ENCODE measurements at regions of chr4 and their contacts with region 1.

Region 1: GRCh38 chr4:120049732-120050494 is 16.7 kb downstream of the MAD2L1 start:
- DNase-seq: peak in 3 of 4 donors; percentile 73 to 89 (median 77)
- ATAC-seq: peak; percentile 99
- H3K4me3 ChIP-seq: no peak overlapping the region
- H3K27ac ChIP-seq: no peak overlapping the region
- H3K4me1 ChIP-seq: peaks cover 4 to 25% of the 10 kb centered on the region in 2 donors
- H3K27me3 ChIP-seq: no peaks in the 10 kb centered on the region
- CTCF ChIP-seq: peak; percentile 60 to 85

Region 2: GRCh38 chr4:119559044-119559647 is 490.8 kb before region 1 on chr4:
- intact Hi-C with region 1: loop called in 1 of 2 experiments (anchors 10 kb)
- DNase-seq: peak in 2 of 4 donors; percentile 38 to 71
- ATAC-seq: peak; percentile 70
- H3K4me3 ChIP-seq: no peak overlapping the region
- H3K27ac ChIP-seq: no peak overlapping the region
- H3K4me1 ChIP-seq: no peaks in the 10 kb centered on the region
- H3K27me3 ChIP-seq: no peaks in the 10 kb centered on the region
- CTCF ChIP-seq: peak; percentile 26 to 56

Region 3: DNA sequence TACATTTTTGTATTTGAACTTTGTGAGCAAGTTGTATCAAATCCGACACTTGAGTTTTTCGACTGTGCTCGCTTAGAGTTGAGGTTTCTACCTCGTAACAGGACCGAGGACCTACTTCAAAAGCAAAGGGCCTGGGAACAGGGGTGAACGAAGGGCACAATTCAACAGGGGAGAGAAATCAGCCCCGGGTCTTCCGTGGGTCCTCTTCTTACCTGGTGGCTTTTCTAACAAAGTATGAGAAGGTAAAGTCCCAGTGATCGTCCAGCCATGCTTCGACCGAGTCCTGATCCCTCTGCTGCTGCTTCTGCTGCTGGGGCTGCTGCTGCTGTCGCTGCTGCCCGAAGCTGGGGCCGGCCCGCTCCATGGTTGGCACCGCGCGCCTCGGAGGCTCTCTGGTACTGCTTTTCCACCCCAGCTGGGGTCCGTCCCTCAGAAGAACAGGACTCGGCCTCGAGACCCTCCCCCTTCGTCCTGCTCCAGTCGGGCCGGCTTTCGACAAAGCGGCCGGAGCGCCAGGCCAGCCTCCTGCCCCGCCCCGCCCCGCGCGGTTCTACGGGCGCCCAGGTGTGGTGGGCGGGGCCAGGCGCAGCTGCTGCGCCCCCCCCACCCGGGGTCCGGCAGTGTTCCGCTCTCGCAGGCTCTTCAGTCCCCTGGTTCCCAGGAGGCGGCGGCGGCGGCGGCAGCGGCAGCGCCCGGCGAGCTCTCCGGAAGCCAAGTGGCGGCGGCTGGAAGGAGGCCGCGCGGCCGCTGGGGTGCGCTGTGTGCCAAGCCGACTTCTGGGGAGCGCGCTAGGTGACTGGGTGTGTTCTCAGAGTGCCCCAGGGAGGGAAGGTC is 421.4 kb before region 1 on chr4 and contains the start of gene PDE5A:
- intact Hi-C with region 1: loop called in 1 of 2 experiments (anchors 5 kb)
- DNase-seq: peak; percentile 67 to 96 (median 88)
- ATAC-seq: peak; percentile 93
- H3K4me3 ChIP-seq: peak within 1 kb of the TSS; percentile 72 to 84
- H3K27ac ChIP-seq: peak within 1 kb of the TSS; percentile 84 to 88
- H3K4me1 ChIP-seq: peaks cover 0 to 25% of the 10 kb centered on the region in 2 donors
- H3K27me3 ChIP-seq: peaks cover 0 to 58% of the 10 kb centered on the region in 2 donors
- CTCF ChIP-seq: peak; percentile 73 to 79
- polyA plus RNA-seq, gene PDE5A: 60.5 to 78.2 (median 68.9) TPM

Measured in left lung (tissue), 14 donors.